ENCODE measurements at regions of chr12 and their contacts with region 1.

Region 1: DNA sequence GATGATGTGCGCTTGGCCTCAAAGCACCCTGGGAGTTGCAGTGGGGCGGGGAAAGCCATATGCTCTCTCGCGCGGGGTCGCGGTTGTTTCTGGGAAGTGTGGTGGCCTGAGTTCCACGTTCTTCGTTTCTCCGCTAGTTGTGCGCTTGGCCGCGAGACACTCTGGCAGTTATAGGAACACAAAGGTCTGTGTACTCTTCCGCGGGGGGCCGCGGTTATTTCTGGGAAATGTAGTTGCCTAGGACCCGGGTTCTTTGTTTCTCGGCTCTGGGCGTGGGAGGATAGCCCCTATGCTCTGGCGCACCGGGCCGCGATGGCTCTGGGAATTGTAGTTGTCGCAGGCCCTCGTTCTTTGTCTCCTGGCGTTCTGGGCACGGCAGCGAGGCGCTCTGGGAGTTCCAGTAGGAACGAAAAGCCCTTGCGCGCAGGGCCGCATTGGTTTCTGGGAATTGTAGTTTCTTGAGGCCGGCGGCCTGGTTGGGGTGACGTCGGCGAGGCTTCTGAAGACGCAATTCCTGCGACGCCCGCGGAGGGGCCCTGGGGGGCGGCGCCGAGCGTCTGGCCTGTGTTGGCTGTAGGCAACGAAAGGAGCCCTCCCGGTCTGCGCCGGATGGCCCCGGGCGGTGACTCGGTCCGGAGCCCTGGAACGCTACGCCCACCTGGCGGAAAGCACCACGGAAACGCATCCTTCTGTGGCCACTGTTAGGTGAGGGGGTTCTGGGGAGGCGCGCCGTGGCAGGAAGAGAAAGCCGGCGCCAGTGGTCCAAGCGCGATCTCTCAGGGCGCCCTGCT is at the start of gene ZNF140:
- DNase-seq: peak; percentile 95 to 97
- ATAC-seq: peak; percentile 84 to 94 (median 87)
- H3K4me3 ChIP-seq: peak within 1 kb of the TSS; percentile 74 to 97 (median 80)
- H3K27ac ChIP-seq: peak within 1 kb of the TSS; percentile 93 to 99 (median 96)
- H3K4me1 ChIP-seq: peaks cover 0 to 18% (median 11%) of the 10 kb centered on the region in 9 donors
- H3K27me3 ChIP-seq: no peaks in the 10 kb centered on the region
- CTCF ChIP-seq: peak; percentile 4 to 44 (median 22)
- total RNA-seq, gene ZNF140: 6.8 to 10.5 (median 9.1) TPM

Region 2: GRCh38 chr12:131912518-131913294 is 1167.9 kb before region 1 on chr12:
- intact Hi-C with region 1: no loop called
- DNase-seq: peak; percentile 91 to 94
- ATAC-seq: peak; percentile 79 to 95 (median 90)
- H3K4me3 ChIP-seq: no peak overlapping the region
- H3K27ac ChIP-seq: peak overlapping the region; percentile 26 to 79 (median 65)
- H3K4me1 ChIP-seq: peaks cover 11 to 23% (median 18%) of the 10 kb centered on the region in 9 donors
- H3K27me3 ChIP-seq: no peaks in the 10 kb centered on the region
- CTCF ChIP-seq: peak in 1 of 9 donors; percentile 17

Region 3: GRCh38 chr12:132899033-132899432 is 181.5 kb before region 1 on chr12:
- intact Hi-C with region 1: no loop called
- DNase-seq: no peak
- ATAC-seq: no peak
- H3K4me3 ChIP-seq: no peak overlapping the region
- H3K27ac ChIP-seq: no peak overlapping the region
- H3K4me1 ChIP-seq: no peaks in the 10 kb centered on the region
- H3K27me3 ChIP-seq: no peaks in the 10 kb centered on the region
- CTCF ChIP-seq: no peak

Region 4: DNA sequence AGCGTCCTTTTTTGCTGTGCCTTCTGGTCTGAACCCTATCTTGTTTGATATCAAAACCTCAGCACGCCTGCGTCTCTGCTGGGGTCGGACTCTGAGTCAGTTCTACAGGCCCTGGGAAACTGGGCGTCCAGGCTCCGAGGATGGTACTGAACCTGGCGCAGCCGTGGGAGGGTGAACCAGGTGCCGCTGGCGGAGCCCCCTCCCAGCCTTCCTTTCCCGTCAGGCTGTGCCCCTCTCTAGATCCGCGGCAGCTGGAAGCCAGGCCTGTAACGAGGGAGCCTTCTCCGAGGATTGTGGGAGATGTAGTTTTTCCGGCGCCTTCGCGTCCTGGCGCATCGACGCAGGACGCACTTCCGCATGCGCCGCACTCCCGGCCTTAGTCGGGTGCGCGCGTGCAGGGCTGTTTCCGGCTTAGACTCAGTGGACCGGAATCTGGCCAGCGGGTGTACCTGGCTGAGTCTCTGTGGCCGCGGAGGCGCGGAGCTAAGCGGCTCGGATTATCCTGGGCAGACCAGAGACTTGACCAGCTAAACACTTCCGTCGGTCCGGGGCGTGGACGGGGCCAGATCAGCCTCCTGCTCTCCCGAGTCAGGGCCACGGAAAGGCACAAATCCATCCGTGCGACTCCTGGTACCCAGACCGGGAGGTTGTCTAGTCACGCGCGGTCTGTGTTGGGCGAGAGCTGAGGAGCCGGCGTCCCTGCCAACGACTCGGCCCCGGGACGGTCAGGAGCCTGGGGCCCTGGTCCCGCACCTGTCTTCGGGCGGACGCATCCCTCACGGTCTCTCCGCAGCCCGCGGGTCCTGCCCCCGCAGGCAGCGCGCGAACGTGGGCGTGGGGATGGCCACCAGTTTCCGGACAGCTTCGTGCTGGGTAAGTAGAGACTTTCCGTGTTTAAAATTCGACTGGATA is 94.3 kb before region 1 on chr12 and contains the start of gene ZNF26:
- intact Hi-C with region 1: loop called in 4 of 10 experiments (anchors 1 to 5 kb)
- DNase-seq: peak; percentile 89 to 93
- ATAC-seq: peak; percentile 99 to 100 (median 100)
- H3K4me3 ChIP-seq: peak within 1 kb of the TSS; percentile 83 to 99 (median 94)
- H3K27ac ChIP-seq: peak within 1 kb of the TSS; percentile 44 to 92 (median 89)
- H3K4me1 ChIP-seq: peaks cover 0 to 23% (median 14%) of the 10 kb centered on the region in 9 donors
- H3K27me3 ChIP-seq: no peaks in the 10 kb centered on the region
- CTCF ChIP-seq: no peak
- total RNA-seq, gene ZNF26: 2.8 to 6.2 (median 4.1) TPM

Region 5: DNA sequence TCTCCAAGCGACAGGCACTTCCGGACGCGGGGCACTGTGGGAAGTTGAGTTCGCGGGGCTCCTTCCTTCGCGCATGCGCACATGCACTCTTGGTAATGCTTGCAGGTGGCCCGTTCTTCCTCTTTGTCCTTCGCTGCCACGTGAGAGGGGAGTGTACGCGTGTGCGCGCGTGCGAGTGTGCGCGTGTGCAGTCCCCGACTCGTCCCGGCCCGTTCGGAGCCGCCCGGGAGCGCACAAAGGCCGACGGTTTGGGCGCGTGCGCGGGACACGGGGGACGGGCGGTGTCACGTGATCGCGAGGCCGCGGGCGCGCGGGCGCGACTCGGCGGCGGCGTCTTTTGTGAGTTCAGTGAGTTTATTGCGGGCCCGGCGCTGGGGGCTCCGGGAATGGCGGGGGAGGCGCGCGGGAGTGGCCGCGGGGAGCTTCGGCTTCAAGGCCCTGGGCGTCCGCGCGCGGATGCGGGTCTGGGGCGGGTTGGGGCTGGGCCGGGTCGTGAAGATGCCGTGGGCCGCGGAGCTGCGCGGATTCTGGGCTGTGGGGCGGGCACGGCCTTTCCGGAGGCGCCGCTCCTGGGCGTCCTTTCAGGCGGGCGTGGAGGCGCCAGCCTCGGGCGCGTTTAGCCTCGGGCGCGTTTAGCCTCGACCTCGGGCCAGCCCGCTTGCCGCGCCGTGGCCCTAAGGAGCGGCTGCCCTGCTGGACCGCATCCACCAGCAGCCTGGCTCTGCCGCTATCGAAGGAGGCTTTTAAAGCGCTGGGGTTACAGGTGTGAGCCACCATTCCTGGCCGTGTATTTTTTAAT is 43.2 kb before region 1 on chr12 and contains the start of gene ZNF84:
- intact Hi-C with region 1: loop called in 6 of 10 experiments (anchors 1 to 5 kb)
- DNase-seq: peak; percentile 95 to 97
- ATAC-seq: peak; percentile 98 to 100 (median 99)
- H3K4me3 ChIP-seq: peak within 1 kb of the TSS; percentile 53 to 90 (median 77)
- H3K27ac ChIP-seq: peak within 1 kb of the TSS; percentile 52 to 96 (median 93)
- H3K4me1 ChIP-seq: peaks cover 0 to 14% (median 8%) of the 10 kb centered on the region in 9 donors
- H3K27me3 ChIP-seq: no peaks in the 10 kb centered on the region
- CTCF ChIP-seq: peak in 1 of 9 donors; percentile 4
- total RNA-seq, gene ZNF84: 13.3 to 23.0 (median 18.3) TPM

Region 6: DNA sequence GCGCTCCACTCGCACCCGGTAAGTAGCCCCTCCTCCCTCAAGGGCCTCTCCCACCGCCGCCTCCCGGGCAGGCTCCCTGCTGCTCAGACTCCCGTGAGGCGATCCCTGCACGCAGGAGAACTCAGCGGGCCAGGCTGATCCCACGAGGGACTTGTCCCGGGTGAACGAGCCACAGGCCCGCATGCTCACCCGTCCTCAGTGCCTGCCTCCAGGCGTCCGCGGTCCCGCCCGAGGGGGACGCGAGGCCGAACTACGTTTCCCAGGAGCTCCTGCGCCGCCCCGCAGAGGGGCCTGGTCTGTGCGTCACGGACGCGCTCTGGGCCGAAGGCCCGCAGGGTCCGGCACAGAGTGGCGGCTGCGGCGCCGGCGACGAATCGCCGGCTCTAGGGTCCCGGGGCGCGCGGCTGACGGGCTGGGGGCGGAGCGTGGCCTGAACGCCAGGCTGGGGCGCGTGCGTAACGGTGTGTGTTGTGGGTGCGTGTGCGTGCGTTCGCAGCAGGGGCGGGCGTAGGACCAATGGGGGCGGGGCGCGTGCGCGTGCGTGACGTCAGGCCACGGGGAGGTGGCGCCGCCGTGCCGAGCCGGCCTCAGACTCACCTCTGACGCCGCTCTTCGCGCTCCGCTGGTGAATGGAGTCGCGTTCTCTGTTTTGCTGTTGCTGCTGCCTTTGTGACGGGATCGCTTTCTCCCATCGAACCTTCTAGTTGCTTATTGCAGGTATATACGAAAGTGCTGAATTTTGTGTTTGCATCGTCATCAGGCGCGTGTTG is 49.7 kb after region 1 on chr12 and contains the starts of genes ZNF10 and ZNF891:
- intact Hi-C with region 1: loop called in 7 of 10 experiments (anchors 1 to 5 kb)
- DNase-seq: peak; percentile 95 to 98
- ATAC-seq: peak; percentile 96 to 100 (median 98)
- H3K4me3 ChIP-seq: peak within 1 kb of the TSS; percentile 73 to 93 (median 84)
- H3K27ac ChIP-seq: peak within 1 kb of the TSS; percentile 89 to 97 (median 92)
- H3K4me1 ChIP-seq: peaks cover 0 to 19% (median 12%) of the 10 kb centered on the region in 9 donors
- H3K27me3 ChIP-seq: no peaks in the 10 kb centered on the region
- CTCF ChIP-seq: peak in 1 of 9 donors; percentile 10
- total RNA-seq, gene ZNF10: 6.5 to 10.5 (median 9.5) TPM
- total RNA-seq, gene ZNF891: 0.64 to 1.2 (median 0.88) TPM

Region 7: GRCh38 chr12:133181238-133181959 is 100.8 kb after region 1 on chr12 and contains the start of gene ZNF268:
- intact Hi-C with region 1: loop called in 3 of 10 experiments (anchors 1 kb)
- DNase-seq: peak; percentile 92 to 95
- ATAC-seq: peak; percentile 96 to 98 (median 98)
- H3K4me3 ChIP-seq: peak within 1 kb of the TSS; percentile 57 to 96 (median 86)
- H3K27ac ChIP-seq: peak within 1 kb of the TSS in 9 of 10 donors; percentile 35 to 85 (median 69)
- H3K4me1 ChIP-seq: peaks cover 0 to 12% (median 7%) of the 10 kb centered on the region in 9 donors
- H3K27me3 ChIP-seq: no peaks in the 10 kb centered on the region
- CTCF ChIP-seq: peak; percentile 66 to 95 (median 90)
- total RNA-seq, gene ZNF268: 7.0 to 13.5 (median 11.5) TPM